ENCODE measurements at regions of chr7 and their contacts with region 1.

Region 1: DNA sequence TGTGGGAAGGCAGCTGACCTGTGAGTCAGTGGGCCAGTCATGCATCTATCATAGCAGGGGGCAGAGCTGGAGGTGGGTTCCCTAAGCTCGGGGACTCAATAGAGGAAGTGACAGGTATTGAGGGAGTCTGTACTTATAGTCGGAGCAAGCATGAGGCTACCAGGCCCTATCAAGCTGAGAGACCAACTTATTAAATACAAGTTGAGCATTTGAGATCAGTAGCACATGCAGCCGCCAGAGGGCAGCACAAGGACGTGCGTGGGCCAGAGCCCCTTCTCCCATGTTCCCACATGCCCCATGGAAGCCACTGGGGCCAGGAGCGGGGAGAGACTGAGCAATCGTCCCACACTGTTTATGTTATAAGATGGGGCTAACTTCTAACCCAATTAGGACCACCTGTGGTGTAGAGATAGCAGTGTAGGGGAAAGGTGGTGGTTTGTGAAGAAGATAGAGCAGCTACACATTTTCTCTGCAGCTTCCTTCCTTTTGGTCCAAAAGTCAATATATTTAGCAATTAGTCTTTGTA is 13.0 kb upstream of the STK31 start:
- DNase-seq: peak; percentile 71 to 89 (median 76)
- ATAC-seq: peak; percentile 98
- H3K4me3 ChIP-seq: no peak overlapping the region
- H3K27ac ChIP-seq: no peak overlapping the region
- H3K4me1 ChIP-seq: peaks cover 0 to 3% of the 10 kb centered on the region in 2 experiments; a peak in 1 of 5 replicates
- H3K27me3 ChIP-seq: no peaks in the 10 kb centered on the region
- CTCF ChIP-seq: peak; percentile 86 to 93 (median 93)
- EP300 ChIP-seq: peak; percentile 17; the same call in 1 of the 2 replicates
- POLR2A ChIP-seq: no peak
- RAD21 ChIP-seq: peak; percentile 74 to 94

Region 2: DNA sequence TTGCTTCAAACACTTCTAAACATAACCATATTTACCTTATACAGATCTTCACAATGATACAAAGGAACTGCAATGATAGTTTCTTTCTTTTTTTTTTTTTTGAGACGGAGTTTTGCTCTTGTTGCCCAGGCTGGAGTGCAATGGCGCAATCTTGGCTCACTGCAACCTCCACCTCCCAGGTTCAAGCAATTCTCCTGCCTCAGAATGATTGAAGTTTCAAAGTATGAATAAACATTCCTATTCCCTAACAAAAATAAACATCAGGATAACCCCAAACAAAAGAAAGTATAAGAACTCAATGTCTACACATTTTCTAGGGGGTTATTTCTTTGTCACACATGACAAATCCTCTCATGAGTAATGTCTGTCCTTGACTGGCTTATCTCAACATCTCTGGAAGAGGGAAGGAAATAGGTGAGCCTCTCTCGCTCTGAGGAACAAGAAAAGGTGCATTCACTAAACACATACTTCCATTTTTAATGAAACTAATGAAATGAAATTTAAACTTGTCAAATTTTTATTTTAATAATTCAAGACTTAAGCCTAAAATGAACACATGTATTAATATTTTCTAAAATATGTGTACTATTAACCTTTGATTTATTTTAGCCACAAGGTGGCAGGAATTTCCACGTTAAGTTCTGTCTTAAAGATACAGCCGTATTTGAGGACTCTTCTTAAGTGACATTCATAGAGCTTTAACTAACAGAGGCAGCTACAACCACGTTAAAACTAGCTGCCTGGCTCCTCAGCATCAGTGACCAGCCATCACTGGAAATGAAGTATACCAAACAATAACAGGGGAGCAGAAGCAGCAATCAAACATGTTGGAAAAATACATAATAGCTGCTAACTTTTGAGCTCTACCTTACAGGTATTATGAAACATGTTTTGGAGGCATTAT is 339.5 kb before region 1 on chr7:
- CTCF ChIA-PET with region 1: no interaction called
- POLR2A ChIA-PET with region 1: no interaction called
- in situ Hi-C with region 1: no loop called
- intact Hi-C with region 1: loop called (anchors 10 kb)
- DNase-seq: peak; percentile 41 to 53 (median 51)
- ATAC-seq: peak; percentile 87
- H3K4me3 ChIP-seq: no peak overlapping the region
- H3K27ac ChIP-seq: peak overlapping the region; percentile 42; the same call in 1 of the 3 replicates
- H3K4me1 ChIP-seq: peaks cover 0 to 8% of the 10 kb centered on the region in 2 experiments; a peak in 2 of 5 replicates
- H3K27me3 ChIP-seq: no peaks in the 10 kb centered on the region
- CTCF ChIP-seq: peak; percentile 35 to 69 (median 43); a peak in 4 of 6 replicates
- EP300 ChIP-seq: no peak
- POLR2A ChIP-seq: no peak
- RAD21 ChIP-seq: peak; percentile 55 to 74

Region 3: GRCh38 chr7:23570592-23571200 is 126.3 kb before region 1 on chr7:
- CTCF ChIA-PET with region 1: interaction called, 8 read pairs
- POLR2A ChIA-PET with region 1: no interaction called
- in situ Hi-C with region 1: no loop called
- intact Hi-C with region 1: loop called (anchors 5 kb)
- DNase-seq: peak; percentile 62 to 86 (median 69)
- ATAC-seq: peak; percentile 98
- H3K4me3 ChIP-seq: no peak overlapping the region
- H3K27ac ChIP-seq: no peak overlapping the region
- H3K4me1 ChIP-seq: peaks cover 0 to 5% of the 10 kb centered on the region in 2 experiments; a peak in 2 of 5 replicates
- H3K27me3 ChIP-seq: no peaks in the 10 kb centered on the region
- CTCF ChIP-seq: peak; percentile 82 to 91 (median 87)
- EP300 ChIP-seq: no peak
- POLR2A ChIP-seq: no peak
- RAD21 ChIP-seq: peak; percentile 96 to 98

Region 4: GRCh38 chr7:23586159-23586558 is 110.8 kb before region 1 on chr7:
- CTCF ChIA-PET with region 1: no interaction called
- POLR2A ChIA-PET with region 1: no interaction called
- in situ Hi-C with region 1: no loop called
- intact Hi-C with region 1: no loop called
- DNase-seq: no peak
- ATAC-seq: no peak
- H3K4me3 ChIP-seq: no peak overlapping the region
- H3K27ac ChIP-seq: no peak overlapping the region
- H3K4me1 ChIP-seq: peaks cover 0 to 6% of the 10 kb centered on the region in 2 experiments; a peak in 2 of 5 replicates
- H3K27me3 ChIP-seq: no peaks in the 10 kb centered on the region
- CTCF ChIP-seq: no peak
- EP300 ChIP-seq: no peak
- POLR2A ChIP-seq: no peak
- RAD21 ChIP-seq: no peak

Region 5: GRCh38 chr7:23654508-23654907 is 42.5 kb before region 1 on chr7:
- CTCF ChIA-PET with region 1: no interaction called
- POLR2A ChIA-PET with region 1: no interaction called
- in situ Hi-C with region 1: no loop called
- intact Hi-C with region 1: loop called (anchors 5 kb)
- DNase-seq: peak; percentile 16 to 57 (median 25)
- ATAC-seq: peak; percentile 69
- H3K4me3 ChIP-seq: no peak overlapping the region
- H3K27ac ChIP-seq: no peak overlapping the region
- H3K4me1 ChIP-seq: peaks cover 0 to 2% of the 10 kb centered on the region in 2 experiments; a peak in 1 of 5 replicates
- H3K27me3 ChIP-seq: peaks cover 0 to 4% of the 10 kb centered on the region in 2 experiments; a peak in 1 of 5 replicates
- CTCF ChIP-seq: peak; percentile 43 to 64 (median 61); a peak in 5 of 6 replicates
- EP300 ChIP-seq: no peak
- POLR2A ChIP-seq: no peak
- RAD21 ChIP-seq: peak; percentile 8 to 66; a peak in 2 of 4 replicates